Psoas muscle (tissue), 8 donors: ENCODE measurements at regions of chr15 and their contacts with region 1.

Region 1: GRCh38 chr15:33086507-33087121 is 107.9 kb downstream of the FMN1 start:
- DNase-seq: no peak
- ATAC-seq: peak; percentile 49 to 67 (median 56)
- H3K4me3 ChIP-seq: no peak overlapping the region
- H3K27ac ChIP-seq: no peak overlapping the region
- H3K4me1 ChIP-seq: peaks cover 23% of the 10 kb centered on the region
- H3K27me3 ChIP-seq: no peaks in the 10 kb centered on the region
- CTCF ChIP-seq: peak; percentile 63

Region 2: DNA sequence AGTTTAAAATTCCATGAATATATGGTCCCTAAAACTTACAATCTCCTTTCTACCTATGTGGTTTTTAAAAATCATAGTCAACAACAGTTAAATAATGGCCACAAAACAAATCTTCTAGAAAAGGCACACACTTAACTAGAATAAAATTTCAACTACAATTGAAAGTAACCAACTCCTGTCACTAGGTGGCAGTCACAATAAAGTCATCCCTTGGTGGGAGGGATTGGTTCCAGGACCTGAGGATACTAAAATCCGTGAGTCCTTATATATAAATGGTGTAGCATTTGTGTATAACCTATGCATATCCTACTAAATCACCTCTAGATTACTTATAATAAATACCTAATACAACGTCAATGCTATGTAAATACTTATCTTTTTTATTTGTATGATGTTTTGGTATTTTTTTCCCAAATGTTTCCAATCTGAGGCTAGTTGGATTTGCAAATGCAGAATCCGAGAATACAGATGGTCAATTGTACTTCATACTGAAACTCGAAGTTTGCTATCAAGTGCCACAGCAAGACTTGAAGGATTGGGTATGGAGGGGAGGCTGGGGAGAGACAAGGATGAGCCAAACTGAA is 64.7 kb before region 1 on chr15:
- intact Hi-C with region 1: loop called in 1 of 2 experiments (anchors 10 kb)
- DNase-seq: no peak
- ATAC-seq: peak; percentile 77 to 92 (median 82)
- H3K4me3 ChIP-seq: no peak overlapping the region
- H3K27ac ChIP-seq: peak overlapping the region; percentile 81
- H3K4me1 ChIP-seq: peaks cover 10% of the 10 kb centered on the region
- H3K27me3 ChIP-seq: no peaks in the 10 kb centered on the region
- CTCF ChIP-seq: peak; percentile 66

Region 3: DNA sequence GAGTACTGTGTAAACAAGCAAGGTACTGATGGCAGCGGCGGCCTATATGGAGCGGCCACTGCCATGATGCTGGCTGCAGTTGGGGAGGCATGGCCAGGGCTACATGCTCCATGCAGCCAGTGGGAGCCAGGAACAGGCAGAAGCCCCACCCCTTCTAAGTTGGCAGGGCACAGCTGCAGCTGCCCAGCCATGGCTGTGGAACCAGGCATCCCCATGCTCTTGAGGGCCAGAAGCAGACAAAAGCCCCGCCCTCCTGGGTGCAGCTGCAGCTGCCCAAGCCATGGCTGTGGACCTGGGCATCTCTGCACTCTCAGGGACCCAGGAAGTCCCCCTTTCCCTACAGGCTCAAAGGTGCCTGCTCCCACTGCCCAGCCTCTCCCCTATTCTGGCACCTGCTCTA is 43.0 kb before region 1 on chr15:
- intact Hi-C with region 1: no loop called
- DNase-seq: no peak
- ATAC-seq: no peak
- H3K4me3 ChIP-seq: no peak overlapping the region
- H3K27ac ChIP-seq: no peak overlapping the region
- H3K4me1 ChIP-seq: no peaks in the 10 kb centered on the region
- H3K27me3 ChIP-seq: no peaks in the 10 kb centered on the region
- CTCF ChIP-seq: no peak

Region 4: GRCh38 chr15:33132722-33133345 is 46.2 kb after region 1 on chr15:
- intact Hi-C with region 1: loop called (anchors 2 kb)
- DNase-seq: no peak
- ATAC-seq: peak; percentile 62 to 78 (median 66)
- H3K4me3 ChIP-seq: no peak overlapping the region
- H3K27ac ChIP-seq: no peak overlapping the region
- H3K4me1 ChIP-seq: peaks cover 38% of the 10 kb centered on the region
- H3K27me3 ChIP-seq: no peaks in the 10 kb centered on the region
- CTCF ChIP-seq: peak; percentile 67

Region 5: GRCh38 chr15:33226559-33227181 is 140.1 kb after region 1 on chr15:
- intact Hi-C with region 1: loop called (anchors 10 kb)
- DNase-seq: no peak
- ATAC-seq: peak; percentile 88 to 94 (median 90)
- H3K4me3 ChIP-seq: no peak overlapping the region
- H3K27ac ChIP-seq: no peak overlapping the region
- H3K4me1 ChIP-seq: peaks cover 6% of the 10 kb centered on the region
- H3K27me3 ChIP-seq: no peaks in the 10 kb centered on the region
- CTCF ChIP-seq: peak; percentile 60

Region 6: GRCh38 chr15:33292717-33293307 is 206.2 kb after region 1 on chr15:
- intact Hi-C with region 1: loop called (anchors 5 to 10 kb)
- DNase-seq: peak in 1 of 2 donors; percentile 24
- ATAC-seq: peak; percentile 61 to 90 (median 78)
- H3K4me3 ChIP-seq: peak overlapping the region; percentile 6
- H3K27ac ChIP-seq: peak overlapping the region; percentile 72
- H3K4me1 ChIP-seq: no peaks in the 10 kb centered on the region
- H3K27me3 ChIP-seq: no peaks in the 10 kb centered on the region
- CTCF ChIP-seq: peak; percentile 72

Region 7: DNA sequence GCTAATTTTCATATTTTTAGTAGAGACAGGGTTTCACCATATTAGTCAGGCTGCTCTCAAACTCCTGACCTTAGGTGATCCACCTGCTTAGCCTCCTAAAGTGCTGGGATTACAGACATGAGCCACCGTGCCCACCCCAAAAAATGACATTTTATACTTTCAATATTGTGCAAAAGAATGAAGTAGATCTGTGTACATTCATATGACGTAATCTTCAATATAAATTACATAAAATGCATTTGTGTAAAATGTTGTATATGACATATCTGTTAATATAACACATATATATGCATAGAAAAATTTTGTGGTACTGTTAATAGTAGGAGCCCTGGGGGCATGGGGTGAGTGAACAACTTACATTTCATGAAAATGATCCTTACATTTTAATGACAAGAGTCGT is 295.9 kb after region 1 on chr15:
- intact Hi-C with region 1: no loop called
- DNase-seq: no peak
- ATAC-seq: no peak
- H3K4me3 ChIP-seq: no peak overlapping the region
- H3K27ac ChIP-seq: no peak overlapping the region
- H3K4me1 ChIP-seq: peaks cover 8% of the 10 kb centered on the region
- H3K27me3 ChIP-seq: no peaks in the 10 kb centered on the region
- CTCF ChIP-seq: no peak

Region 8: DNA sequence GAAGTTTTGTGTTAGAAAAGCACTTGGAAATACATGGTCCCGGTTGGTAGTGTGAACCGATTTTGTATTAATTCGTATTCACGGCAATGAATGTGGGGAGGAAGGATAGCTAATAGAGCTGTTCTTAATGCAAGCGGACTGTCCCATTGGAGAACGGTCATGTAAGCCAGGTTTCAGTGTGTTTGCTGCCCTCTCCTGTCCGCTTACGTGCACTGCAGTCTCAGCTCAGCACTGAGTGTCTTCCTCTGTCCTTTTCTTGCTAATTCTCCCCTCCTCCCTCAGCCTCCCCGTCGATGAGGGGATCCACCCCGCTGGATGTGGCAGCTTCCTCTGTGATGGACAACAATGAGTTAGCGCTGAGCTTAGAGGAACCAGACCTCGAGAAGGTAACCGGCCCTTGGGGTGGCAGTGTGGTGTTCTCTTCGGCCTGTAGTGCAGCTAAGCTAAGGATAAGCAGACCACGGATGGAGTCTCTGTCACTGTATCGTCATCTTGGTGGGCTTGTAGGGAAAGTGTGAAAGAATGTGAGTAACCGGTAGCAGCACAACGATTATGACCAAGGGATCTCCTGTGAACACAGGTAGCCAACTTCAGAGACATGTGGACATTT is 614.2 kb after region 1 on chr15:
- intact Hi-C with region 1: loop called (anchors 10 kb)
- DNase-seq: peak; percentile 69 to 76
- ATAC-seq: peak; percentile 89 to 98 (median 94)
- H3K4me3 ChIP-seq: peak overlapping the region; percentile 27
- H3K27ac ChIP-seq: no peak overlapping the region
- H3K4me1 ChIP-seq: peaks cover 5% of the 10 kb centered on the region
- H3K27me3 ChIP-seq: no peaks in the 10 kb centered on the region
- CTCF ChIP-seq: peak; percentile 93